Transverse colon (tissue), 4 donors: ENCODE measurements at regions of chr10 and their contacts with region 1.

Region 1: GRCh38 chr10:119431034-119431767 is 111.3 kb downstream of the RGS10 start:
- DNase-seq: no peak
- H3K4me3 ChIP-seq: no peak overlapping the region
- H3K27ac ChIP-seq: no peak overlapping the region
- H3K4me1 ChIP-seq: no peaks in the 10 kb centered on the region
- H3K27me3 ChIP-seq: no peaks in the 10 kb centered on the region
- CTCF ChIP-seq: no peak
- EP300 ChIP-seq: no peak
- POLR2A ChIP-seq: no peak

Region 2: GRCh38 chr10:119178372-119179119 is 252.7 kb before region 1 on chr10 and contains the start of gene PRDX3:
- in situ Hi-C with region 1: no loop called
- intact Hi-C with region 1: no loop called
- DNase-seq: peak; percentile 95
- H3K4me3 ChIP-seq: peak within 1 kb of the TSS; percentile 51 to 84 (median 78)
- H3K27ac ChIP-seq: peak within 1 kb of the TSS; percentile 88 to 94 (median 90)
- H3K4me1 ChIP-seq: peaks cover 15 to 31% (median 23%) of the 10 kb centered on the region in 4 donors
- H3K27me3 ChIP-seq: no peaks in the 10 kb centered on the region
- CTCF ChIP-seq: peak in 3 of 5 experiments; percentile 17 to 24 (median 24)
- EP300 ChIP-seq: no peak
- POLR2A ChIP-seq: peak; percentile 67
- total RNA-seq, gene PRDX3: 24.7 to 141 (median 78.9) TPM

Region 3: GRCh38 chr10:119461380-119461779 is 30.2 kb after region 1 on chr10:
- in situ Hi-C with region 1: no loop called
- intact Hi-C with region 1: no loop called
- DNase-seq: no peak
- H3K4me3 ChIP-seq: no peak overlapping the region
- H3K27ac ChIP-seq: no peak overlapping the region
- H3K4me1 ChIP-seq: no peaks in the 10 kb centered on the region
- H3K27me3 ChIP-seq: no peaks in the 10 kb centered on the region
- CTCF ChIP-seq: no peak
- EP300 ChIP-seq: no peak
- POLR2A ChIP-seq: no peak

Region 4: GRCh38 chr10:121433965-121434364 is 2002.8 kb after region 1 on chr10:
- in situ Hi-C with region 1: no loop called
- intact Hi-C with region 1: loop called (anchors 5 kb)
- DNase-seq: no peak
- H3K4me3 ChIP-seq: no peak overlapping the region
- H3K27ac ChIP-seq: no peak overlapping the region
- H3K4me1 ChIP-seq: peaks cover 0 to 12% (median 7%) of the 10 kb centered on the region in 4 donors
- H3K27me3 ChIP-seq: no peaks in the 10 kb centered on the region
- CTCF ChIP-seq: no peak
- EP300 ChIP-seq: no peak
- POLR2A ChIP-seq: no peak